ENCODE measurements at regions of chr2 and their contacts with region 1.

Region 1: DNA sequence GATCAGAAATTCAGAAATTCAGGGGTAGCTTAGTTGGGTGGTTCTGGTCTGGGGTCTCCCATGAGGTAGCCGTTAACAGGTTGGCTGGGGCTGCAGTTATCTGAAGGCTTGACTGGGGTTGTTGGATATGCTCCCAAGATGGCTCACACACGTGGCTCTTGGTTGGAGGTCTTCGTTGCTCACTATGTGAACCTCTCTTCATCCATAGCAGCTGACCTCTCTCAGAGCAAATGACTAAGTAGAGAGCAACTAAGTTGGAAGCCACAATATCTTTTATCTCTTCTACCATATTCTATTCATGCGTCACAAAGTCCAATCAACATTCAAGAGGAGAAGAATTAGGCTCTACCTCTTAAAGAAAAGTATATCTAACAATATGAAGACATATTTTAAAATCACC is 38.7 kb upstream of the SERTAD2 start:
- DNase-seq: no peak
- ATAC-seq: no peak

Region 2: GRCh38 chr2:64354857-64355680 is 337.3 kb before region 1 on chr2:
- intact Hi-C with region 1: loop called (anchors 5 kb)
- DNase-seq: no peak
- ATAC-seq: no peak

Measured in sciatic nerve (tissue), 2 donors.